Gastrocnemius medialis (tissue), 4 donors: ENCODE measurements at regions of chr19 and their contacts with region 1.

Region 1: GRCh38 chr19:1652471-1653299 is at the start of gene TCF3:
- DNase-seq: peak; percentile 94 to 98
- ATAC-seq: peak; percentile 98 to 99
- H3K4me3 ChIP-seq: peak within 1 kb of the TSS; percentile 69 to 85 (median 80)
- H3K27ac ChIP-seq: peak within 1 kb of the TSS; percentile 89 to 100 (median 98)
- H3K4me1 ChIP-seq: peaks cover 11% of the 10 kb centered on the region in 2 donors
- H3K27me3 ChIP-seq: no peaks in the 10 kb centered on the region
- CTCF ChIP-seq: peak in 2 of 5 experiments; percentile 26 to 39
- POLR2A ChIP-seq: peak; percentile 20 to 63
- total RNA-seq, gene TCF3: 22.0 to 58.6 (median 42.5) TPM

Region 2: DNA sequence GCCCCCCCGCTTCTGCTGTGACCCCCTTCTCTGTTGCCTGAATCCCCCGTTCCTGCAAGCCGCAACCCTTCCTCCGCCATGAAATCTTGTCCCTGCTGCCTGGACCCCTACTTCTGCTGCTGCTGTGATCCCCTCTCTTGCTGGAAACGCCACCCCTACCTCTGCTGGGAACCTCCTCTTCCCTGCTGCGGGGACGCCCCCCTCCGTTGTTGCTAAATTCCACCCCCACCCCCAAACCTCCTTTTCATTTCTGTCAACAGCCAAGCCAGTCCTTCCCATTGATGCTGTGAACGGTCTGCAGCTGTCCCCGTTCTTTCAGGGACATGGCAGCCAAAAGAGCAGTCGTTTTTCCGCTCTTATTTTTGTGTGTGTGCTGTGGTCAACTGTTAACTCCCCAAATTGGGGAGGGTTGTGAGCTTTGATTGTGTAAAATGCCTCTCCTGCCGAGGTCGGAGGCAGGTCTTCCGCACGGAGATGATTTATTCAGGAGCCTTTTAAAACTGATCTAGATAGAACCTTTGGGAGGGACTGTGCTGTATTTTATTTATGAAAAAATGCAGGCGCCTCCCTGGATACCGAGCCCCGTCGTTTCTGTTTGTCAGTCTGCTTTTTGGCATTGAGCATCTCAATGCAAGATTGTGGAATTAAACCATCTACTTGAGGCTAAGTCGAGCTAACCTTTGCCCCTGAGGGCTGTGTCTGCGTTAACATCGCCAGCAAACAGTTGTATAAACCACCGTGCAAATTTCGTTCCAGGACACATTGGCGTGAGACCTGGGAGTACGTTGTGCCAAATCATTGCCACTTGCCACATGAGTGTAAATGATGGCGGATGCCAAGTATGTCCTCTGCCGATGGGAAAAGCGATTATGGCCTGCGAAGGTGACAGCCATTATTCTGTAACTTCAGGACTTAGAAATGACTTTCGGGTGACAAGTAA is 296.8 kb before region 1 on chr19:
- in situ Hi-C with region 1: no loop called
- intact Hi-C with region 1: loop called (anchors 2 kb)
- DNase-seq: no peak
- ATAC-seq: no peak
- H3K4me3 ChIP-seq: peak overlapping the region; percentile 65 to 80 (median 74)
- H3K27ac ChIP-seq: peak overlapping the region; percentile 82 to 97 (median 90)
- H3K4me1 ChIP-seq: peaks cover 15 to 25% of the 10 kb centered on the region in 2 donors
- H3K27me3 ChIP-seq: no peaks in the 10 kb centered on the region
- CTCF ChIP-seq: no peak
- POLR2A ChIP-seq: no peak

Region 3: GRCh38 chr19:1513499-1514294 is 139.0 kb before region 1 on chr19:
- in situ Hi-C with region 1: no loop called
- intact Hi-C with region 1: loop called (anchors 5 kb)
- DNase-seq: peak in 1 of 2 donors; percentile 54
- ATAC-seq: peak; percentile 73 to 75
- H3K4me3 ChIP-seq: peak overlapping the region; percentile 64 to 69 (median 64)
- H3K27ac ChIP-seq: peak overlapping the region; percentile 83 to 91 (median 89)
- H3K4me1 ChIP-seq: peaks cover 3 to 29% of the 10 kb centered on the region in 2 donors
- H3K27me3 ChIP-seq: no peaks in the 10 kb centered on the region
- CTCF ChIP-seq: peak; percentile 41 to 90 (median 83)
- POLR2A ChIP-seq: no peak

Region 4: DNA sequence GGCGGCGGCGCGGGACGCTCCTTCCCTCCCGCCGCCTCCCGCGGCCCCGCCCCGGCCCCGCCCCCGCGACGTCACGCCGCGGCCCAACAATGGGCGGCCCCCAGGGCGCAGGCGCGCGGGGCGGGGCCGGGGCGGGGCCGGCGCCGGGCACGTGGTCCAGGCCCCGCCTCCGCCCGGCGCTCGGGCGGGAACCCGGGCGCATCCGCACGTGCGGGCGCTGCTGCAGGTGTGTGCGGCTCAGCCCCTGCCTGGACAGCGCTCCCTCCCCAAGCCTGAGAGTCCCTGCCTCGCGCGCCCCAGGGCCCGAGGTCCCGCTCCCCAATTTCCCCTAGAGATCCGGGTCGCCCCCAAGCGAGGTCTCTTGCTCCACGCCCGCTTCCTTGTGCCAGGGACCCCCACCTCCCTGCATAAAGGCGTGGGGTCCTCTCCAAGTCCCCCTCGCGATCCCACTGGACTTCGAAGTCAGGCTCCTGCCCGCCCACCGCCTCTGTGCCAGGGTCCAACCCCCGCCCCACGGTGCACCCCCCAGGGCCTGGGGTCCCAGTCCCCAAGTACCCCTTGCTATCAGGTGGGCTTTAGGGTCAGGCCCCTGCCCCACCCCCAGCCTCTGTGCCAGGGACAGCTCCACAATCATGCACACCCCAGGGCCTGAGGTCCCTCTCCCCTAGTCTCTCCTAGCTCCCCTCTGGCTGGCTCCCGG is 84.2 kb before region 1 on chr19 and contains the start of gene MEX3D:
- in situ Hi-C with region 1: no loop called
- intact Hi-C with region 1: loop called (anchors 1 kb)
- DNase-seq: peak; percentile 37 to 62
- ATAC-seq: peak; percentile 79 to 90
- H3K4me3 ChIP-seq: peak within 1 kb of the TSS; percentile 37 to 53 (median 51)
- H3K27ac ChIP-seq: peak within 1 kb of the TSS in 3 of 4 donors; percentile 13 to 62 (median 52)
- H3K4me1 ChIP-seq: peaks cover 4 to 7% of the 10 kb centered on the region in 2 donors
- H3K27me3 ChIP-seq: peaks cover 6 to 11% (median 8%) of the 10 kb centered on the region in 3 donors
- CTCF ChIP-seq: no peak
- POLR2A ChIP-seq: no peak
- total RNA-seq, gene MEX3D: 2.4 to 7.9 (median 5.3) TPM

Region 5: GRCh38 chr19:1592755-1593500 is 59.8 kb before region 1 on chr19 and contains the start of gene MBD3:
- in situ Hi-C with region 1: no loop called
- intact Hi-C with region 1: loop called (anchors 1 kb)
- DNase-seq: peak; percentile 89 to 94
- ATAC-seq: peak; percentile 80 to 87
- H3K4me3 ChIP-seq: peak within 1 kb of the TSS; percentile 76 to 90 (median 85)
- H3K27ac ChIP-seq: peak within 1 kb of the TSS; percentile 88 to 98 (median 94)
- H3K4me1 ChIP-seq: peaks cover 19 to 30% of the 10 kb centered on the region in 2 donors
- H3K27me3 ChIP-seq: no peaks in the 10 kb centered on the region
- CTCF ChIP-seq: peak in 2 of 5 experiments; percentile 18 to 21
- POLR2A ChIP-seq: no peak
- total RNA-seq, gene MBD3: 66.9 to 147 (median 118) TPM

Region 6: GRCh38 chr19:1605236-1606137 is 47.2 kb before region 1 on chr19 and contains the start of gene UQCR11:
- in situ Hi-C with region 1: loop called in 1 of 4 experiments (anchors 10 kb)
- intact Hi-C with region 1: loop called (anchors 1 kb)
- DNase-seq: peak; percentile 93 to 95
- ATAC-seq: peak; percentile 94 to 96
- H3K4me3 ChIP-seq: peak within 1 kb of the TSS; percentile 83 to 99 (median 96)
- H3K27ac ChIP-seq: peak within 1 kb of the TSS; percentile 92 to 99 (median 98)
- H3K4me1 ChIP-seq: peaks cover 23 to 40% of the 10 kb centered on the region in 2 donors
- H3K27me3 ChIP-seq: no peaks in the 10 kb centered on the region
- CTCF ChIP-seq: peak; percentile 34 to 58 (median 52)
- POLR2A ChIP-seq: peak; percentile 52 to 79
- total RNA-seq, gene UQCR11: 106 to 173 (median 154) TPM